Endothelial cell of umbilical vein (primary cell): ENCODE measurements at regions of chr2 and their contacts with region 1.

Region 1: DNA sequence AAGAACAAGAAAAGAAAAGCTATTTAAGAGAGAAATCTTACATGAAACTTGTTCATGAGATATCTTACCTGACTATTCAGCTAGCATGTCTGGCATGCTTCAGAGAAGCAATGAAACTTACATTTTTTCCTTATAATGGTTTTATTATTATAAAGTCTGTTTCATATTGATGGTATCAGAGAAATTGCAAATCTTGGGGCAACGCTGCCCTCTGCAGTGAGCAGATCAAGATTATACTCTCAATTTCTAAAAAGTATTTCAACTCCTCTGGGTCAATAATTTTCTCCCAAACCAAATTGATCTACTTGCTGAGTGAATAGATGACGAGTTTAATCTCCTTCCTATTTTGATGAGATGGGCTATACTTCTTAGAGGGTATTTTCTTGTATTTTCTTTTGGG is 235.6 kb downstream of the NUP35 start:
- DNase-seq: peak; percentile 48
- H3K4me3 ChIP-seq: no peak overlapping the region
- H3K27ac ChIP-seq: no peak overlapping the region
- H3K4me1 ChIP-seq: no peaks in the 10 kb centered on the region
- H3K27me3 ChIP-seq: no peaks in the 10 kb centered on the region
- CTCF ChIP-seq: peak in 1 of 2 donors; percentile 11
- POLR2A ChIP-seq: no peak

Region 2: DNA sequence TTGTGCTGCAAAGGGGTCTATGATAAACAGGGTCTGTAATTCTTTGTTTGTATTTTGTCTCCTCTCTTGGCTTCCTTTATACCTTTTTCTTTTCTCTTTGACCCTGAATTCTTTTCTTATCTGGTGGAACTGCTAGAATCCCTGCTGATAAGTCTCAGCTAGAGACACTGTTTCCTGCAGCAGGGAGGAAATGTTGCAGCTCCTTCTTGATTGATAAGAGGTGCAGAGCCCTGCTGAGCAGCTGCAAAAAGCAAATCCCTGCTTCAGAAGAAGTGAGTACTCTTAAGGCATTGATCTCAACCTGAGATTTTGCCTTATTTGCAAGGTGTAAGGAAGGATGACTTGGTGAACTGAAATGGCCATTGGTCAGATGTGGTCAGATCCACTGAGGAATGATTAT is 67.8 kb before region 1 on chr2:
- CTCF ChIA-PET with region 1: interaction called, 8 read pairs
- POLR2A ChIA-PET with region 1: no interaction called
- dilution Hi-C with region 1: no loop called
- intact Hi-C with region 1: loop called (anchors 1 kb)
- DNase-seq: peak; percentile 55
- H3K4me3 ChIP-seq: no peak overlapping the region
- H3K27ac ChIP-seq: no peak overlapping the region
- H3K4me1 ChIP-seq: peaks cover 5% of the 10 kb centered on the region
- H3K27me3 ChIP-seq: no peaks in the 10 kb centered on the region
- CTCF ChIP-seq: no peak
- POLR2A ChIP-seq: no peak

Region 3: DNA sequence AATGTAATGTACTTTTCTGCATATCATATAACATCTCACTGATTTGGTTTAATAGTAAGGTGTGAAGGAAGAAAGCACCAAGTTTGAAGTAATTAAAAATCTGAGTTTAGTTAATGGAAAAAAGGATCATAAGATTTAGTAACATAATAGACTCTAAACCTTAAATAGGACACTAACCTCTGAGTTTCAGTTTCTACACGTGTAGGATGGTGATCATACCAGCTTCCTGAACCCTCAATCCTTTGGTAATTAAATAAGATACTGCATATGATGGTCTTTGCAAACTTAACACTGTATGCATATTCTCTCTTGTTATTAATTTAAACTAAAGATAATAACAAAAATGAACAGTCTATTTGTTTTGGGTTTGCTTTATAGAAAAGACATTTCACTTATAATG is 18.8 kb before region 1 on chr2:
- CTCF ChIA-PET with region 1: interaction called, 10 read pairs
- POLR2A ChIA-PET with region 1: no interaction called
- dilution Hi-C with region 1: no loop called
- intact Hi-C with region 1: no loop called
- DNase-seq: no peak
- H3K4me3 ChIP-seq: no peak overlapping the region
- H3K27ac ChIP-seq: no peak overlapping the region
- H3K4me1 ChIP-seq: no peaks in the 10 kb centered on the region
- H3K27me3 ChIP-seq: no peaks in the 10 kb centered on the region
- CTCF ChIP-seq: no peak
- POLR2A ChIP-seq: no peak

Region 4: GRCh38 chr2:183416753-183417152 is 56.9 kb after region 1 on chr2:
- CTCF ChIA-PET with region 1: no interaction called
- POLR2A ChIA-PET with region 1: no interaction called
- dilution Hi-C with region 1: no loop called
- intact Hi-C with region 1: no loop called
- DNase-seq: no peak
- H3K4me3 ChIP-seq: no peak overlapping the region
- H3K27ac ChIP-seq: no peak overlapping the region
- H3K4me1 ChIP-seq: no peaks in the 10 kb centered on the region
- H3K27me3 ChIP-seq: no peaks in the 10 kb centered on the region
- CTCF ChIP-seq: no peak
- POLR2A ChIP-seq: no peak

Region 5: DNA sequence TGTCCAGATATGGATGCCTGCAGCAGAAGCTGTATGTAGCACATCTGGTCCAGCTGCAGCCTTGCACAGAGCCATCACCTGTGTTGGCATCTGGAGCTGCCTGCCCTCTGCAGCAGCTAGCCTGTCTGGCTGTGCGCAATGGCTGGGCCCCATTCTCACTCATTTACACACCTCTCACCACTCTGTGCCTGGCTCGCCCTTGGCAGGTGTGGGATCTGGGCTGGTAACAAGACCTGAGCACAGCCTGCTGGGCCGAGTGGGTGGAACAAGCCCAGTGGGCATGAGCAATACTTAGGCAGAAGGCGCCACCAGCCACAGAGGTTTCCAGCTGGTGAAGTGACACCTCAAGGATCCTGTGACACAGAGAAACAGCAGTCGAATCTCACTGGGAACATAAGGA is 478.4 kb after region 1 on chr2:
- CTCF ChIA-PET with region 1: no interaction called
- POLR2A ChIA-PET with region 1: no interaction called
- dilution Hi-C with region 1: no loop called
- intact Hi-C with region 1: no loop called
- DNase-seq: no peak
- H3K4me3 ChIP-seq: no peak overlapping the region
- H3K27ac ChIP-seq: no peak overlapping the region
- H3K4me1 ChIP-seq: no peaks in the 10 kb centered on the region
- H3K27me3 ChIP-seq: no peaks in the 10 kb centered on the region
- CTCF ChIP-seq: no peak
- POLR2A ChIP-seq: no peak